ENCODE measurements at regions of chr2 and their contacts with region 1.

Region 1: GRCh38 chr2:11389551-11390528 is 45.4 kb upstream of the ROCK2 start:
- DNase-seq: peak; percentile 34 to 54
- H3K4me3 ChIP-seq: no peak overlapping the region
- H3K27ac ChIP-seq: peak overlapping the region in 2 of 3 donors; percentile 63 to 78
- H3K4me1 ChIP-seq: peaks cover 15 to 37% of the 10 kb centered on the region in 2 donors
- H3K27me3 ChIP-seq: no peaks in the 10 kb centered on the region
- CTCF ChIP-seq: no peak
- POLR2A ChIP-seq: peak in 1 of 2 donors; percentile 17

Region 2: GRCh38 chr2:11344342-11344955 is 45.4 kb before region 1 on chr2 and contains the start of gene ROCK2:
- intact Hi-C with region 1: loop called (anchors 10 kb)
- DNase-seq: peak; percentile 84 to 87
- H3K4me3 ChIP-seq: peak within 1 kb of the TSS; percentile 81 to 97 (median 88)
- H3K27ac ChIP-seq: peak within 1 kb of the TSS; percentile 94 to 99 (median 97)
- H3K4me1 ChIP-seq: peaks cover 15 to 30% of the 10 kb centered on the region in 2 donors
- H3K27me3 ChIP-seq: no peaks in the 10 kb centered on the region
- CTCF ChIP-seq: no peak
- POLR2A ChIP-seq: peak in 1 of 2 donors; percentile 75
- total RNA-seq, gene ROCK2: 37.3 to 47.5 (median 42.1) TPM